Activated naive CD8-positive, alpha-beta T cell treated with anti-CD3 and anti-CD28 coated beads, Interleukin-2, amount 10 ng/mL, durations not matched to agents 7 days and 5 days (primary cell): ENCODE measurements at regions of chr12 and their contacts with region 1.

Region 1: DNA sequence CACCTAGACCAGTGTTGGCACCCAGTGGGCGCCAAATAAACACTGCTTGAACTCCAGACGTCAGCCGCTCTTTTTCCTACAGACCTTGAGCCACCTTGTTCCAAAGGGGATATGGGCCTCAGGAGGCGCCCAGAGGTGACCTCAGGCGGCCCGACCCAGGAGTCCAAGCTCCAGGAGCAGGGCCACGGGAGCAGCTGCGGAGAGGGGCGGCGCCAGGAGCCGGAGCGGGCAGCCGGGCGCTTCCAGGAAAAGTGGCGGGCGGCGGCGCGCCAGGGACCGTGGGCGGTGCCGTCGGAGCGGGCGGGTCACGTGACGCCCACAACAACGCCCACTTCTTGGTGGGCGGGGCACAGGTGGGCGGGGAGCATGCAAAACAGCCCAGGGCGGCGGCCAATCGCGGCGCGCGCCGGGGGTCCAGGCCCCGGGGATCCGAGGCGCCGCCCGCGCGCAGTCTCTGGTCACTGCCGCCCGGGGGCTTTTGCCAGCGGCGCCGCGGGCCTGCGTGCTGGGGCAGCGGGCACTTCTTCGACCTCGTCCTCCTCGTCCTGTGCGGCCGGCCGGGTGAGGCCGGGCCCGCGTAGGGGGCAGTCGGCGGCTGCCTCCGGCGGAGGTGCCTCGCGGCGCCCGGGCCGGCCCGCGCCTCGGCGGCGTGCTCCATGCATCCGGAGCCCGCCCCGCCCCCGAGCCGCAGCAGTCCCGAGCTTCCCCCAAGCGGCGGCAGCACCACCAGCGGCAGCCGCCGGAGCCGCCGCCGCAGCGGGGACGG is at the start of gene ORAI1:
- DNase-seq: peak; percentile 99
- ATAC-seq: peak; percentile 72
- H3K4me3 Mint-ChIP-seq: peak within 1 kb of the TSS; percentile 96
- H3K27ac Mint-ChIP-seq: peak within 1 kb of the TSS; percentile 96
- H3K4me1 Mint-ChIP-seq: peaks cover 42% of the 10 kb centered on the region
- H3K27me3 Mint-ChIP-seq: no peaks in the 10 kb centered on the region
- total RNA-seq, gene ORAI1: 54.2 to 60.1 TPM

Region 2: DNA sequence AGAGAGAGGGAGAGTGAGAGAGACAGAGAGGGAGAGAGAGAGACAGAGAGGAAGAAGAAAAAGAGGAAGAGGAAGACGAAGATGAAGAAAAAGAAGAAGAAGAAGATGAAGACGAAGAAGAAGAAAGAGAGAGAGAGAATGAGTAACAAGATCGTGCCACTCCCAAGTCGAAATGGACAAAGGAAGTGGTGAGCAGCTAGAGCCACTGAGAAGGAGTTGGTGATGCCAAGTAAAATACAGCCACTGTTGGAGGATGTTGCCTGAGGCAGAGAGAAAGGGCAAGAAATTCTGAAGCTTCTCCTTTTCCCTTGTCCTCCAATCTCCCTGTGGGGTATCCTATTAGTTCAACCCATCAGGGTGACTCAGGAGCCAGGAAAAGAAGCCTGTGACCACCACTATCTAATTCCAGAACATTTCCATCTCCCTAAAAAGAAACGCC is 261.6 kb before region 1 on chr12:
- POLR2A ChIA-PET with region 1: no interaction called
- DNase-seq: no peak
- ATAC-seq: no peak
- H3K4me3 Mint-ChIP-seq: no peak overlapping the region
- H3K27ac Mint-ChIP-seq: no peak overlapping the region
- H3K4me1 Mint-ChIP-seq: peaks cover 10% of the 10 kb centered on the region
- H3K27me3 Mint-ChIP-seq: peaks cover 34% of the 10 kb centered on the region

Region 3: GRCh38 chr12:121536899-121537813 is 89.1 kb before region 1 on chr12:
- POLR2A ChIA-PET with region 1: interaction called, 14 read pairs
- DNase-seq: peak; percentile 72
- ATAC-seq: peak; percentile 43
- H3K4me3 Mint-ChIP-seq: peak overlapping the region; percentile 76
- H3K27ac Mint-ChIP-seq: peak overlapping the region; percentile 82
- H3K4me1 Mint-ChIP-seq: peaks cover 44% of the 10 kb centered on the region
- H3K27me3 Mint-ChIP-seq: no peaks in the 10 kb centered on the region

Region 4: DNA sequence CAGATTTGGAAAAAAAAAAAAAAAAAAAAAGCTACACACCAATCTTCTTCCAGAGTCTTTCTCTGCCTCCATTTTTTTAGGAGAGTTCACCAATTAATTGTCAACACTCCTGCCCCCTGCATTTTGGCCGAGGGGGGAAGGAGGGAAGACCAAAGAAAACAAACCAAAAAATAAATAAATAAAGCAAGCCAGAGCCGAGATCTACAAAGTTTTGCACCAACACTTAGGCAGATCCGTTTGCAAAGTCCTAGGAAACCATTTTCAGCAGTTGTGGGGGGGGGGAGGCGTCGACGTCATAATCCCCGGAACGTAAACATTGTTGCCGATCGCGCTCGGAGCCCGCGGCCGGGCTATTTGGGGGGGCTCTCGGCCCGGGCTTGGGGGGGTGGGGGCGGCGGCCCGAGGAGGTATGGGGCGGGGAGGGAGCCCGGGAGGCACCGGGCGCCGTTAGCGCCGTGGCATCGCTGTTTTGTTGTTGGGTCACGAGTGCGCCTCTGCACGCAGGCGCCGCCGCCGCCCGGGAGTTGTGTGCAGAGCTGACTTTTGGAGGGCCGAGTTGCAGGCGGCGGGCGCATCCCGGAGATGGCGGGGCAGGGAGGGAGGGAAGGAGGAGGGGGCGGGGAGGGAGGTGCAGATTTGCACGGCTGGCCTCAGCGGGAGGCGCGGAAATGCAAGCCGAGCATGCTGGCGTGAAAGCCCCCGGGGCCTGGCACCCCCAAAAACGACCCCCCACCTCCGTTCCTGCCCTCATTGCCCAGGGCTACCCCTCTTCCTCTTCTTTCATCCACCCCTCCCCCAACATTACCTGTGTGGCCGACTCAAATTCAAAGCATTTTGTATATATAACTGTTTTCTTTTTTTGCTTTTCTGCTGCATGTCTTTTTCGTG is 46.0 kb before region 1 on chr12:
- POLR2A ChIA-PET with region 1: interaction called, 61 read pairs
- DNase-seq: peak; percentile 82
- ATAC-seq: peak; percentile 63
- H3K4me3 Mint-ChIP-seq: peak overlapping the region; percentile 93
- H3K27ac Mint-ChIP-seq: peak overlapping the region; percentile 98
- H3K4me1 Mint-ChIP-seq: peaks cover 31% of the 10 kb centered on the region
- H3K27me3 Mint-ChIP-seq: no peaks in the 10 kb centered on the region

Region 5: DNA sequence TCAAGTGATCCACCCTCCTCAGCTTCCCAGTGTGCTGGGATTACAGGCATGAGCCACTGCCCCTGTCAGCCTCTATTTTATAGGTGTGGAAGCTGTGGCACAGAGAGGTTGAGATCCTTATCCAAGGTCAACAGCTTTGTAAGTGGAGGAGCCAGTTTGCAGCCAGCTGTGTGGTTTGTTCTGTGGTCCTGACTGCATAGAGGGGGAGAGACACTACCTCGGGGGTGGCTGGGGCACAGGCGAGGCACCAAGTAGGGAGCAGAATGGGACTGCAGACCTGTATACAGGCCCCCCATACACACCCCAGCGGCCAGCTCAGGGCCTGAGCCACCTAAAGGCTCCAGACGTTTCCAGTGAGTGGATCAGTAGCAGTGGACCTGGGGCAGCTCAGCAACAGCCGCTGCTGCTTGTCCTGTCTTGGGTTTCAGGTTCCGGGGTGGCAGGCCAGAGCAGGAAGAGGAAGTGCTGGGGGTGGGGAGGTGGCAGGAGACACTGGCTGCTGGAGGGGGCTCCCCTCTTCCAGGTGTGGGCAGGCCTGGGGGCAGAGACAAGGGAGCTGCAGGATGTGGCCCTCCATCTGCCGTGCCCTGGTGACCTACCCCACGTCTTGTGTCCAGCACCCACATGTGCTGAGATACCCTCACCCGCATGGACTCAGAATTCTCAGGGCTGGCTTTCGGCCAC is 11.1 kb after region 1 on chr12:
- POLR2A ChIA-PET with region 1: interaction called, 88 read pairs
- DNase-seq: peak; percentile 76
- ATAC-seq: peak; percentile 87
- H3K4me3 Mint-ChIP-seq: peak overlapping the region; percentile 66
- H3K27ac Mint-ChIP-seq: peak overlapping the region; percentile 94
- H3K4me1 Mint-ChIP-seq: peaks cover 45% of the 10 kb centered on the region
- H3K27me3 Mint-ChIP-seq: no peaks in the 10 kb centered on the region

Region 6: DNA sequence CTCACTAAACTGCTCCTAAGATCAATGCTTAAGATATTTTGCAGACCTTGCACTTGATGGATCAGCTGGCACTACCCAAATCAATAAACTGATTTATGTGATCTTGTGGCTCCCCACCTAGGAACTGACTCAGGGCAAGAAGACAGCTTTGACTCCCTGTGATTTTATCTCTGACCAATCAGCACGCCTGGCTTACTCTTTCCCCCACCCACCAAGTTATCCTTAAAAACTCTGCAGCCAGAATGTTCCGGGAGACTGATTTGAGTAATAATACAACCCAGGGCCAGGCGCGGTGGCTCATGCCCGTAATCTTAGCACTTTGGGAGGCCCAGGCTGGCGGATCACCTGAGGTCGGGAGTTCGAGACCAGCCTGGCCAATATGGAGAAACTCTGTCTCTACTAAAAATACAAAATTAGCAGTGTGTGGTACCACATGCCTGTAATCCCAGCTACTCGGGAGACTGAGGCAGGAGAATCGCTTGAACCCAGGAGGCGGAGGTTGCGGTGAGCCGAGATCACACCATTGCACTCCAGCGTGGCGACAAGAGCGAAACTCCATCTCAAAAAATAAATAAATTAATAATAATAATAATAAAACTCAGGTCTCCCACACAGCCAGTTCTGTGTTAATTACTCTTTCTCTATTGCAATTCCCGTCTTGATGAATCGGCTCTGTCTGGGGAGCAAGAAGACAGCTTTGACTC is 31.2 kb after region 1 on chr12:
- POLR2A ChIA-PET with region 1: interaction called, 35 read pairs
- DNase-seq: no peak
- ATAC-seq: no peak
- H3K4me3 Mint-ChIP-seq: no peak overlapping the region
- H3K27ac Mint-ChIP-seq: peak overlapping the region; percentile 57
- H3K4me1 Mint-ChIP-seq: peaks cover 50% of the 10 kb centered on the region
- H3K27me3 Mint-ChIP-seq: no peaks in the 10 kb centered on the region